Cardiac septum (tissue), 1 donor: ENCODE measurements at regions of chr11 and their contacts with region 1.

Region 1: GRCh38 chr11:134139873-134140331 is 71.0 kb downstream of the JAM3 start:
- DNase-seq: no peak

Region 2: GRCh38 chr11:133927690-133928627 is 211.9 kb before region 1 on chr11:
- intact Hi-C with region 1: loop called (anchors 2 kb)
- DNase-seq: peak; percentile 85

Region 3: GRCh38 chr11:134068829-134069425 is 71.0 kb before region 1 on chr11 and contains the start of gene JAM3:
- intact Hi-C with region 1: loop called (anchors 5 kb)
- DNase-seq: peak; percentile 97
- total RNA-seq, gene JAM3: 46.5 TPM

Region 4: DNA sequence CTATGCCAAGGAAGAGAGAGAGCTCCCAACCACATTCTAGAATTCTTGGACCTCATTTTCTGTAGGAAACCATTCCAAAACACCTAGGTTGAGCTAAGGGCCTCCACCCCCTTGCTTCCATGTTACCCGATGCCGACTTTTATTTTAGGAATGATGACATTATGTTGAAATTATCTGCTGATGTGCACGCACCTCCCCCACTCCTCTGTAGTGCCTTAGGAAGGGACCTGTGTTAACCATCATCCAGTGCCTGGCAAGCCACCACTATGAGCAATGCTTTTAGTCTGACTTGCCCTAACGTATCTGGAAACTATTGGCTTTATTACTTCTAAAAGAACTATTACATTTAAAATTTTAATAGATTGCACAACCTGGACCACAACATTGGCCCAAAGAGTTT is 41.8 kb after region 1 on chr11:
- intact Hi-C with region 1: no loop called
- DNase-seq: no peak

Region 5: GRCh38 chr11:134331354-134332188 is 191.7 kb after region 1 on chr11 and contains the start of gene GLB1L2:
- intact Hi-C with region 1: no loop called
- DNase-seq: no peak
- total RNA-seq, gene GLB1L2: 0.57 TPM